Ascending aorta (tissue), 2 donors: ENCODE measurements at regions of chr4 and their contacts with region 1.

Region 1: DNA sequence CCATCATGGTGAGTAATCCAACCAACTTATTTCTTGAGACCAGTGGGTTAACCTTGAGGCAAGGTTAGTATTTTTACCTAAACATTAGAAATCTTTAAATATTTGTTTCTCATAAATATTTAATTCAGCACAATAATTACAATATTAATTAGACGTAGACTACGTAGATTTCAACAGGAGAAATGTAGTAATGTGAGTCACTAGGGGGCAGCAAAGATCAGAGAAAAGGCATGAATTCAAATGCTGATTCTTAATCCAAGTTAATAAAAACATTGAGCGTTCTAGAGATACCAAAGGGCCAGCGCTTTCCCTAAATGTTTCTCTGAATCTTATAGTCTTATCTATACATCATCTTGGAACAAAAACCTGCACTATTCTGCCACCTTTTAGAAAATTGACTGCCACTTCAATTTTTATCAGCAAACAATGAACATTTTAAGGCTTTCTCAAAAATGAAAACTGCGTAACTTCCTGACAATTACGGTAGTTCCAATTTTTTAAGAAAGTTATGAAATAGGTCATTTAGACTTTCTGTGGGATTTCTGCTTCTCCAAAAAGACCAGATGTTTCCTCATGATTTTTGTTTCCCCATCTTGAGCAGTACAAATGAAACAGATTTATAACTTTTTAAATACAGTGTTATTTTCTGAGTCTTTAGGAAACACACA is 180.7 kb downstream of the GASK1B start:
- DNase-seq: no peak
- H3K4me3 ChIP-seq: peak overlapping the region; percentile 57 to 59
- H3K27ac ChIP-seq: peak overlapping the region; percentile 69
- H3K4me1 ChIP-seq: no peaks in the 10 kb centered on the region
- H3K27me3 ChIP-seq: no peaks in the 10 kb centered on the region
- CTCF ChIP-seq: peak; percentile 67 to 78 (median 76)

Region 2: DNA sequence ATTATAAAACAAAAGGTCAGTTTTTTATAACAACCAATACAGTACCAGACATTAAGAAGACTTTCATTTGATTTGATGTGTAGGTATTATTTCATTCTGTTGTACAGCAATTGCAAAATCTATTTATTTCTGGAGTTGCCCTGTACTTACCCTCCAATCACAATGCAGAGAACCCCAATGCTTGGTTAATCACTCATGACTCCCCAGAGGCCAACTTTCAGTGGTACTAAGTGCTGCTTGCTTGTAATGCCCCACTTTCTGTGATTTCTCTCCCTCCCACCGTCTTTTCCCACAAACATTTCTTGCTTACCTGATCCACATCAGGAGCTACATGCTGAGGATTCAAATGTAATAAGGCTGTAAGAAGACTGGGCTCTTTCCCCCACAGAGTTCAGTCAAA is 73.7 kb before region 1 on chr4:
- intact Hi-C with region 1: no loop called
- DNase-seq: no peak
- H3K4me3 ChIP-seq: no peak overlapping the region
- H3K27ac ChIP-seq: peak overlapping the region; percentile 26 to 48
- H3K4me1 ChIP-seq: no peaks in the 10 kb centered on the region
- H3K27me3 ChIP-seq: no peaks in the 10 kb centered on the region
- CTCF ChIP-seq: no peak

Region 3: DNA sequence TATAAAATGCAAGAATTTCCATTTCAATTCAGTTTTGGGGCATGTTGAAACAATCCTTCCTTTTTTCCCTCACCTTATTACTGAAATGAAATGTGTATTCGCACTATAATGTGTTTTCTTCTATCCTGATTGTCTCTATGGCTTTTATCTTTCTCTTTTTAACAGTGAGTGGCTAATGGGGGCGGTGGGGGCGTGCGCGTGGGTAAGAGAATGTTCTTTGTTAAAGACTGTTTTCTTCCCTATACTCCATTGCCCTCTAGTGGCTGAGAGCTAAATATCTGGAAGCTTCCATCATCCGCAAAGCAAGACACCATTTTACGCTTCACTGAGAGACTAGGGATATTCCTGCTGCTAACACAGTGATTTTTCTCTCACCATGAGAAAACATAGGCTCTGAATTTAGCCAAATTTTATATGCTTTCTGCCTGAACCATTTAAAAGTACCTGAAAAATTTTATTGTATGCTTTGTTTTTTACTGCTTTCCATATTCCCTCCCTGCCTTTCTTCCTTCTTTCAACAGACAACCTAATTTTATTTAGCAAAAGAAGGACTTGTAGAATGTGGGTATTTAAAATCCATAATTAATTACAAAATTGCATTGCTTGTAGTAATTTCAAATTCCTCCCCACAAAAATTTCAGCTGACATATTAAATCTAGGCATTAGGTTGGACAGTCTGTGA is 13.4 kb before region 1 on chr4:
- intact Hi-C with region 1: no loop called
- DNase-seq: peak in 1 of 2 donors; percentile 72
- H3K4me3 ChIP-seq: peak overlapping the region; percentile 43 to 50
- H3K27ac ChIP-seq: no peak overlapping the region
- H3K4me1 ChIP-seq: peaks cover 0 to 3% of the 10 kb centered on the region in 2 donors
- H3K27me3 ChIP-seq: no peaks in the 10 kb centered on the region
- CTCF ChIP-seq: peak; percentile 77 to 86 (median 82)

Region 4: DNA sequence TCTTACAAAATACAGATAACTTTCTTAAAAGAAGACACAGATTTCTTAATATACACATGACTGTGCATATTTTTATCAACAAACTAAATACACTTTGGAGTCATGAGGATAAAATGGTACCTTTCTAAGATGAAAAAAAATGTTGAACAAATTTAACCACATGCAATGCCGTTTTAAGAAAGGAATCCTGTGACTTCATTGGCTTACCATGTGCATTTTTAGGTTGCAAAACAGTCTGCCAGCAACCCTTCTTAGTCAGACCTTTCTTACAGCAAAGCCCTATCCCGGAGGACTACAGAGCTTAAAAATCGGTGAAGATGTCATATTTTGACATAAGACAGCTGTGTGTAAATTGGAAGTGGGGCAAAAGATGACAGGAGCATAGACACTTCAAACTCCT is 129.0 kb after region 1 on chr4:
- intact Hi-C with region 1: loop called (anchors 5 kb)
- DNase-seq: peak in 1 of 2 donors; percentile 80
- H3K4me3 ChIP-seq: peak overlapping the region in 1 of 2 donors; percentile 50
- H3K27ac ChIP-seq: peak overlapping the region; percentile 69 to 78
- H3K4me1 ChIP-seq: peaks cover 0 to 21% of the 10 kb centered on the region in 2 donors
- H3K27me3 ChIP-seq: no peaks in the 10 kb centered on the region
- CTCF ChIP-seq: no peak

Region 5: DNA sequence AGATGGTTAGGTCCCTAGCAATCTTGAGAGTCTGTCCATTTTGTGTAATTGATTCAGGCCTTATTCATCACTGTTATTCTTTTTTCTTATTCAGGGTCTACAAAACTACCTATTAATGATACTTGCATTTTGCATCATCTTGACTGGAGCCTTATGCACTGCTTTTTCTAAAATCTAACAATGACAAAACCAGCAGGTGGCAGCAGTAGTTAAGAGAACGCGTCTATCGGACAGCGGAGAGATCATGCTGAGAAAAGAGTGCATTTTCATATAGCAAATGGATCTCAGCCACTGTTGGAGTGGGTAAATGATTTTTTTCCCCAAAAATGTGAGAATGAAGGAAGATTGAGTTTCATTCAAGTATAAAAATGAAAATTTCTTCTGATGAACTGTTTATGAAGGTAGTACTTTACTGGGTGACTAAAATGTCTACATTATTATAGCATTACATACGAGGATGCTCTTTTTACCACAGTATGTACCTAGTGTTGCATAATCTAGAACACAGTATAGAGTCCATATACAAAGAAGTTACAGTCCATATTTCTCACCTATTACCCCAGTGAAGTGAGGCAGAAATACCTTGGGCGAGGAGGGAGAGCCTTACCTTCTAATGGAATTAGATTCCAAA is 261.3 kb after region 1 on chr4:
- intact Hi-C with region 1: loop called (anchors 1 kb)
- DNase-seq: peak in 1 of 2 donors; percentile 72
- H3K4me3 ChIP-seq: peak overlapping the region in 1 of 2 donors; percentile 2
- H3K27ac ChIP-seq: peak overlapping the region; percentile 40 to 49
- H3K4me1 ChIP-seq: no peaks in the 10 kb centered on the region
- H3K27me3 ChIP-seq: no peaks in the 10 kb centered on the region
- CTCF ChIP-seq: peak; percentile 47 to 73 (median 57)

Region 6: GRCh38 chr4:158624889-158625478 is 632.8 kb after region 1 on chr4:
- intact Hi-C with region 1: loop called (anchors 5 kb)
- DNase-seq: no peak
- H3K4me3 ChIP-seq: peak overlapping the region in 1 of 2 donors; percentile 37
- H3K27ac ChIP-seq: peak overlapping the region; percentile 30 to 70
- H3K4me1 ChIP-seq: peaks cover 0 to 4% of the 10 kb centered on the region in 2 donors
- H3K27me3 ChIP-seq: no peaks in the 10 kb centered on the region
- CTCF ChIP-seq: peak; percentile 68 to 73 (median 72)